ENCODE measurements at regions of chr2 and their contacts with region 1.

Region 1: GRCh38 chr2:27871802-27872201 is 18.4 kb downstream of the RBKS start:
- DNase-seq: no peak
- H3K4me3 ChIP-seq: no peak overlapping the region
- H3K27ac ChIP-seq: no peak overlapping the region
- H3K4me1 ChIP-seq: no peaks in the 10 kb centered on the region
- H3K27me3 ChIP-seq: no peaks in the 10 kb centered on the region
- CTCF ChIP-seq: no peak

Region 2: GRCh38 chr2:27849558-27850205 is 22.1 kb before region 1 on chr2:
- CTCF ChIA-PET with region 1: no interaction called
- POLR2A ChIA-PET with region 1: interaction called, 14 read pairs
- intact Hi-C with region 1: no loop called
- DNase-seq: no peak
- H3K4me3 ChIP-seq: no peak overlapping the region
- H3K27ac ChIP-seq: no peak overlapping the region
- H3K4me1 ChIP-seq: peaks cover under 1% of the 10 kb centered on the region; the same call in 1 of the 2 replicates
- H3K27me3 ChIP-seq: no peaks in the 10 kb centered on the region
- CTCF ChIP-seq: no peak

Region 3: DNA sequence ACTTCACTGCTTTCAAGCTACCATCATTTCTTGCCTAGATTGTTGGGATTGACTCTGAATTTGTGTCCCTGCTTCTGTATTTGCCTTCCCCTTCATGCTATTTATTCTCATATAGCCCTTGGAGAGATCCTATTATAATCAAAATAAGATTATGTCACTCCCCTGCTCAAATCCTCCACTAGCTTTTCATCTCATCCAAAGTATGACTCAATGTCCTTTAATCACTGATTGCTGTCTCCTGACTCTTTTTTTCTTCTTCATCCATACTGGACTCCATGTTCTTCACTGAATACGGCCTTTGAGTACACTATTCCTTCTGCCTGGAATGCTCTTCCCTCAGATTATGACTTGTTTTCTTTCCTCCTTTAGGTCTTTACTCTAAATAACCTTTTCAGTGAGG is 13.4 kb after region 1 on chr2:
- CTCF ChIA-PET with region 1: interaction called, 5 read pairs
- POLR2A ChIA-PET with region 1: interaction called, 12 read pairs
- intact Hi-C with region 1: no loop called
- DNase-seq: no peak
- H3K4me3 ChIP-seq: no peak overlapping the region
- H3K27ac ChIP-seq: no peak overlapping the region
- H3K4me1 ChIP-seq: peaks cover 26% of the 10 kb centered on the region
- H3K27me3 ChIP-seq: no peaks in the 10 kb centered on the region
- CTCF ChIP-seq: no peak

Region 4: DNA sequence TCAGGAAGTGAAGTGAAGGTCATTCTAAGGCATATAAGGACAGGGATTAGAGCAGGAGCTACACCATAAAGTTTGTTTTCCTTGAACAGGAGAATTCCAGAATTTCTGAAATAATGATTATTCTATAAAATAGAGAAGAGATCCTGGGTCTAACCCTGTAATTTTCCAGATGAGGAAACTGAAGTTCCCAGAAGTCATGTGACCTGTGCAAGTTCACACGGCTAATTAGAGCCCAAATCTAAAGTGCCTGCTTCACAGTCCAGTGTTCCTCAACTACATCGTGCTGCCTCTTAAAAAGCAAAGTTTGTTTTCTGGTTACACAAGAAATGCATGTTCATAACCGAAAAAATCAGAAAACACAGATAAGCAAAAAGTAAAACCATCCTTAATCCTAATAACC is 659.0 kb after region 1 on chr2:
- CTCF ChIA-PET with region 1: no interaction called
- POLR2A ChIA-PET with region 1: interaction called, 11 read pairs
- intact Hi-C with region 1: no loop called
- DNase-seq: no peak
- H3K4me3 ChIP-seq: no peak overlapping the region
- H3K27ac ChIP-seq: no peak overlapping the region
- H3K4me1 ChIP-seq: no peaks in the 10 kb centered on the region
- H3K27me3 ChIP-seq: no peaks in the 10 kb centered on the region
- CTCF ChIP-seq: no peak